Activated naive CD4-positive, alpha-beta T cell treated with anti-CD3 and anti-CD28 coated beads for 36 hours (primary cell): ENCODE measurements at regions of chr3 and their contacts with region 1.

Region 1: DNA sequence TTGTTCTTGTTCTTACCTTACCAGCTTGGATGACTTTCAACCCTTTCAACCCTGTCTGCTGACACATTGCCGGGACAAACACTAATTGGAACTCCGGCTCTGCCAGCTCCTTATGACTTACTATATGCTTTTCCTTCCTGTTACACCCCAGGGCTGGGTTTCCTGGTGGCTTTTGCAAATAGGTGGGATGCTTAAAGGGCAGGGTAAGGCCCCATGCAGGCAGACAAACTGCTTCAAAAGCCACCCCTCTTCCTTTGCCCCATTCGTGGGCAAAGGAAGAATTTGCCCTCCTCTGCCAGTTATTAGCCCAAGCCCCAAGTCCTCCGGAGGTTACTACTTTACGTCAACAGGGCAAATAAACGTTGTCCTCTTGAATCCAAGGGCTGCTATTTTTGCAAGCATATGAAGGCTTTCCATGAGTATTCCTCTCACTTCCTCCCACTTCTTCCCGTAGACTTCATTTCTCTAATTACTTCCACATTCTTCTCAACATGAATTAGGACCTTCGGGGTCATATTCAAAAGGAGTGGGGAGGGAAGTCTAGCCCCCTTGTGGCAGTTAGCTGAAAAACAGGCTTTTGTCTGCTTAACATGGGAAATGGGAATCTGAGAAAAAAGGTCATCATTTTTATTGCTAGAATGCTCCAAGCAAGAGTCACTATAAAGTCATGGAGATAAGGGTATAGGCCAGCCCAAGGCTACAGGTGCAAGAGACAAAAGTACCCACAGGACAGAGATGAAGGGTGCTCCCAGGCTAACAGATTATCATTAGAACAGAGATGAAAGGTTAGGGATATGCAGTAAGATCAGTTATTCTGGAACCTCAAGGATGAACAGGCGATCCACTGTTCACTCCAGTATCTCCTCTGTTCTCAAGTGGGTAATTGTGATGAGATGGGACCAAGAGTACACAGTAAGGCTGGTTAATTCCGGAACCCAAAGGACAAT is 56.3 kb upstream of the FSTL1 start:
- DNase-seq: peak; percentile 14
- H3K4me3 Mint-ChIP-seq: no peak overlapping the region
- H3K27ac Mint-ChIP-seq: no peak overlapping the region
- H3K4me1 Mint-ChIP-seq: no peaks in the 10 kb centered on the region
- H3K27me3 Mint-ChIP-seq: peaks cover 18% of the 10 kb centered on the region

Region 2: GRCh38 chr3:120239644-120240043 is 267.5 kb before region 1 on chr3:
- CTCF ChIA-PET with region 1: interaction called, 3 read pairs
- intact Hi-C with region 1: loop called (anchors 5 kb)
- DNase-seq: no peak
- H3K4me3 Mint-ChIP-seq: no peak overlapping the region
- H3K27ac Mint-ChIP-seq: no peak overlapping the region
- H3K4me1 Mint-ChIP-seq: no peaks in the 10 kb centered on the region
- H3K27me3 Mint-ChIP-seq: peaks cover 8% of the 10 kb centered on the region